Left cardiac atrium (tissue), 4 donors: ENCODE measurements at regions of chr9 and their contacts with region 1.

Region 1: GRCh38 chr9:4315582-4316215 is 15.8 kb upstream of the GLIS3 start:
- DNase-seq: peak; percentile 75
- ATAC-seq: peak; percentile 90 to 95

Region 2: DNA sequence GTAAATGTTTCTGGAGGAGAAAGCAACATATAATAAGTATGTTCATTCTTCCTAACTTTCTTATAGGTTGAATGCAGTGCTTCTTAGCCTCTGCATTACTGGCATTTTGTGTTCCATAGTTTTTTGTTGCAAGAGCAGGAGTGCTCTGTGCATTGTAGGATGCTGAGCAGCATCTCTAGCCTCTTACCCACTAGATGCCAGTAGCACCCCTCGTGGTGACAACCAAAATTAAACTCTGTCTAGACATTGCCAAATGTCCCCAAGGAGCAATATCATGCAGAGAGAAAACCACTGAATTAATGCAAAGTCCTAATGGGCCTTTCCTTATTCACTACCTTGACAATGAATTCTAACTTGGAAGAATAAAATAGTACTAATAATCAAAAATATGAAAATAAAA is 162.8 kb before region 1 on chr9:
- intact Hi-C with region 1: no loop called
- DNase-seq: no peak
- ATAC-seq: no peak

Region 3: DNA sequence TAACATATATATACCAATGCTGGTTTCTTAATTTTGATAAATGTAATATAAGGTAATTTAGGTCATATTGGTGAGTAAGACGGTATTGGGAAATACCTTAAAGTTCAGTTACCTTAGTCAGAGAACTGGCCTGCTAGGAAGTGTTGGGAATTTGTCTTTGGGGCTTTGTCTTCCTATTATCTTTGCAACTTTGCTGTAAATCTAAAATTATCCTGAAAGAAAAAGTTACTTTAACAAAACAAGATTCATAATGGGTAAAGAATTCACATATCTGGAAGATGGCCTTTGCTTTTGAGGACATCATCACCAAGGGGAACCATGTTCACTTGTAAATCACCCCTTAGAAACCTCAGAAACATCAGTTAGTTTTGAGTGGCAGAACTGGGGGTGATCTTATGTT is 57.4 kb before region 1 on chr9:
- intact Hi-C with region 1: no loop called
- DNase-seq: no peak
- ATAC-seq: peak in 1 of 2 donors; percentile 44

Region 4: GRCh38 chr9:4339357-4339756 is 23.7 kb after region 1 on chr9:
- intact Hi-C with region 1: loop called in 1 of 2 experiments (anchors 2 kb)
- DNase-seq: peak; percentile 83
- ATAC-seq: peak; percentile 66 to 74

Region 5: GRCh38 chr9:4375424-4376200 is 59.9 kb after region 1 on chr9:
- intact Hi-C with region 1: loop called in 1 of 2 experiments (anchors 2 kb)
- DNase-seq: no peak
- ATAC-seq: peak; percentile 58 to 59